ENCODE measurements at regions of chr2 and their contacts with region 1.

Region 1: DNA sequence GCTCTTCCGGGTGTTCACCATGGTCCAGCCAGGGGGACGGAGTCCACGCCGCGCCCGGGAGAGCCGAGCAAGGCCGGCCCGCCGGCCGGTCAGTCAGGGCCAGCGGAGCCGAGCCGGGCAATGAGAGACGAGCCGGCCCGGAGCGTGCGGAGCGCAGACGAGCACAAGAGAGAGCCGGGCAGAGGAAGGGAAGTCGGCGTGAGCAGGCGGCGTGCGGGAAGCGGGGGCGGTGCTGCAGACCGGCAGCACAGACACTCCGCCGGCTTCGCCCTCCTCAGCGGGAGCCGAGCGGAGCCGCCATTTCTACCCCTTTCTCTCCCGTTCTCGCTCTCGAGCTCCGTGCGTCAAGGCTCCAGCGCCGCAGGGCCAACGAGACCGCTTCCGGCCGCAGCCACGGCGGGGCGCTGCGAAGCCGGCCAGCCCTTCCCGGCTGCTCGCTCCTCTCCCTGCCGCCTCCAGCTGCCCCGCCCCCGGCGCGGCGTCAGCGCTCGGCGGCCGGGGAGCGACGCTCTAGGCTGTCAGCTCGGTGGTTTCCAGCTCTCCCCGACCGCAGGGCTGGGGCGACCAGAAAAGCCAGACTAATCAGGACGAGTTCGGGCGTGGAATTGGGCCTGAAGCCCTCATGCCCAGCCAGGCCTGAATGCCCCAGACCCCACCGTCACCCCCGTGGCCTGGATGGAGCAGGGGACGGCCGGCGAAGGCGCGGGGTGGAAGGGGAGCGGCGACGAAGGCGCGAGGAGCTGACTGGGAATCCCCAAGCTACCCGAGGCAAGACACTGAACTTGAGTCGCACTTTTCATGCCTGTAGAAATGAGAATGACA is at the start of gene ATAD2B:
- DNase-seq: peak; percentile 96
- ATAC-seq: peak; percentile 98
- total RNA-seq, gene ATAD2B: 6.9 TPM

Region 2: DNA sequence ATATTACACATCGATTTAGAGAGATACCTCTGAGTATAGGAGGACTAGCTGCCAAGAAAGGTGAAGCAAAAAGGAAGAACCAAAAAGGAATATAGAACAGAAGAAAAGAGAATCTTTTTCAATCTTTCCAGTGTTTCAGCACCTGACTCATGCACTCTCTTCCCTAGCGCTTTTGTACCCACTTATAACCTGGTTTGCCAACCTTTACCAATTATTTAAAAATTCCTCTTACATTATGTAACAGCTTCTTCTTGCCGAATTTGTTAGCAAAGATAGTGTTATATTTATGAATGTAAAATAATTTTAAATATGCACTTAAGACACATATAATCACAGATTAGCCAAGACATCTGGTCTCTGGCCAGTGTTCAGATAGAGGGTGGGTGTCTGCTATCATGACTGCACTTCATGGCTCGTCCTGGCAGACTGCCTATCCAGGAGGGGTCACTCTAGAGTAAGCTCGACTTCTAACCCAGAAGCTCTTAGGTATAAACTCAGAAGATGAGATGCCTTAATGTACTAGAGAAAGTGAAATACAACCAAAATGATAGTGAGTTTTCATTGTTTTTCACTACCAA is 122.9 kb before region 1 on chr2:
- intact Hi-C with region 1: no loop called
- DNase-seq: peak; percentile 65
- ATAC-seq: peak; percentile 52

Region 3: DNA sequence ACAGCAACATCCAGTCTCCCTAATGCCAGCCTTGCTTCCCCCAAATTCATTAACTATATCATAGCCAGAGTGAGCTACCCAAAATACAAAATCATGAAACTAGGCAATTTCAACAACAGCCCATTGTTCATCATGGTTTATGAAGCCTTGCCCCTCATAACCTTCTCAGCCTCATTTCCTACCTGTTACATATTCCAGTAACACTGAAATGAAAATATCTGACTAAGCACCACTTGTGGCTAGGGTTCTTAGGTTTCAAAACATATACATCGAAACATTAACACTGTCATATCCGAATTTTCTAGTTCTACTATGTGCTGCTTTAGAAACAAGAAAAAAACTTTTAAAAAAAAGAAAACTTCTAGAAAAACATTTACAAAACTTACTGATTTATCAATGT is 59.5 kb before region 1 on chr2:
- intact Hi-C with region 1: no loop called
- DNase-seq: no peak
- ATAC-seq: no peak

Region 4: DNA sequence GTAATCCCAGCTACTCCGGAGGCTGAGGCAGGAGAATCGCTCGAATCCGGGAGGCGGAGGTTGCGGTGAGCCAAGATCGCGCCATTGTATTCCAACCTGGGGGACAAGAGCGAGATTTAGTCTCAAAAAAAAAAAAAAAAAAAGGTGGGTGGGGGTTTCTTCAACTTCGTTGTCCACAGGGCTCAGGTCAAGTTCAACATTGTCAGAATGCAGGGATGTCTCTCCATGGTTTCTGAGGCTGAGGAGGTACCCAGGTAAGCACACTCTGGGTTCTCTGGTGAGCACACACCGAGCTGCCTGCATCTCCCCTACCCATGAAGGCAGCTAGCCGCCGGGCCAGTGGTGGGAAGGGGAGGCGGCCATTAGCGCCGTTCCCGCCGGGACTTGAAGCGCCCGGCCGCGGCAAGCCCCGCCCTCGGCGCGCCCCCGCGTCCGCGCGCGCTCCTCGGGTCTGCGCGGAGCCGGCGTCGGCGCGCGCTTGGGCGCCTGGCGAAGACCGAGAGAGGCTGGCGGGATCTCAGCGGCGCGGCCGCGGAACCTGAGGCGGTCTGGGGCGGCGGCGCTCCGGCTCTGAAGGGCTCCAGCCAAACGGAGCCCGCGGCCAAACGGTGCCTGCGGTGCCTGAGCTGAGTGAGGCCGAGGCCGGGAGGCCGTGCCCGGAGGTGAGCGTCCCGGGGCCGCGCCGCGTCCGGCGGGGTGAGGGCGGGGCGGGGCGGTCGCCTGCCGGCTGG is 13.2 kb after region 1 on chr2 and contains the start of gene UBXN2A:
- intact Hi-C with region 1: loop called (anchors 1 kb)
- DNase-seq: peak; percentile 91
- ATAC-seq: peak; percentile 93
- total RNA-seq, gene UBXN2A: 21.2 TPM

Region 5: GRCh38 chr2:24015562-24016346 is 88.8 kb after region 1 on chr2:
- intact Hi-C with region 1: no loop called
- DNase-seq: no peak
- ATAC-seq: no peak

Region 6: DNA sequence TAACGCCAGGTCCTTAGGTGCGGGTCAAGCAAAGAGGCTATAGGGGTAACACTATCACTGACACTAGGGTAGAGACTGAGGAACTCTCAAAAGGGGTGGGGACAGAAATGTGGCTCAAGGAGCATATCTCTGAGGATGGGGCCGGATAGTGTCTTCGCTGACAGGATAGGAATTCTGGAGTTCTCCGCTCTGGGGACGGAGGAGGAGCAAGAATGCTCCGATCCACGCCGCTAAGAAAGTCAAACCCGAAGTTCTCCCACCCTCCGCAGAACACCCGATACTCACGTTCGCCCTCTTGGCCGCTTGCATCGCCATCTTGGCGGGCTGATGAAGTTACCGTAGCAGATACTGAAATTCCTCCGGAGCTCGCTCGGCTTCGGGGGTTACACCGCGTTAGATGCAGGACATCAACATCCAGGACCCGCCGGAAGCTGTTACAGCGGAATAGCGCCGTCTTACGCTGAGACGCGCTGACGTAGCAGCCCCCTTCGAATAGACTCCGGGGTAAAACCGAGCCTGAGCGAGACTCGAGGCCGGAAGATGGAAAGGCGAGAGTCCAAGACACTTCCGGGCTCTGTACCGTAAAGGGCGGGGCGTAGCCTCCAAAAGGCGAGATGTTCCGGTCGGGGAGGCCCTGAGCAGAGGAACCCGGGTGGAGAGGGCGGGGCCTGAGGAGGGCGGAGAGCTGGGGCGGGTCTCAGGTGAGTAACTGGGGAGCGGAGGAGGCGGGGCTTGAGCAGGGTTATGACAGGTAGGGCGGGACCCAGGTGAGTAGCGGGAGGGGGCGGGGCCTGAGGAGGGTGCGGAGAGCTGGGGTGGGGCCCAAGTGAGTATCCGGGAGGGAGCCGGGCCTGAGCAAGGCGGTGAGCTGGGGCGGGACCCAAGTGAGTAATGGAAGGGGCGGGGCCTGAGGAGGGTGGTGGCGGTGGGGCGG is 149.2 kb after region 1 on chr2 and contains the start of gene SF3B6:
- intact Hi-C with region 1: loop called (anchors 2 kb)
- DNase-seq: peak; percentile 98
- ATAC-seq: peak; percentile 97
- total RNA-seq, gene SF3B6: 53.7 TPM

Measured in Right ventricle myocardium inferior (tissue), 1 donor.